Stomach (tissue), 19 donors: ENCODE measurements at regions of chr7 and their contacts with region 1.

Region 1: GRCh38 chr7:123865517-123866117 is 20.6 kb downstream of the HYAL4 start:
- DNase-seq: peak; percentile 60 to 89
- H3K4me3 ChIP-seq: no peak overlapping the region
- H3K27ac ChIP-seq: no peak overlapping the region
- H3K4me1 ChIP-seq: peaks cover 0 to 20% (median 11%) of the 10 kb centered on the region in 4 donors
- H3K27me3 ChIP-seq: no peaks in the 10 kb centered on the region
- CTCF ChIP-seq: peak in 5 of 7 experiments; percentile 53 to 78 (median 75)
- EP300 ChIP-seq: no peak
- POLR2A ChIP-seq: no peak

Region 2: DNA sequence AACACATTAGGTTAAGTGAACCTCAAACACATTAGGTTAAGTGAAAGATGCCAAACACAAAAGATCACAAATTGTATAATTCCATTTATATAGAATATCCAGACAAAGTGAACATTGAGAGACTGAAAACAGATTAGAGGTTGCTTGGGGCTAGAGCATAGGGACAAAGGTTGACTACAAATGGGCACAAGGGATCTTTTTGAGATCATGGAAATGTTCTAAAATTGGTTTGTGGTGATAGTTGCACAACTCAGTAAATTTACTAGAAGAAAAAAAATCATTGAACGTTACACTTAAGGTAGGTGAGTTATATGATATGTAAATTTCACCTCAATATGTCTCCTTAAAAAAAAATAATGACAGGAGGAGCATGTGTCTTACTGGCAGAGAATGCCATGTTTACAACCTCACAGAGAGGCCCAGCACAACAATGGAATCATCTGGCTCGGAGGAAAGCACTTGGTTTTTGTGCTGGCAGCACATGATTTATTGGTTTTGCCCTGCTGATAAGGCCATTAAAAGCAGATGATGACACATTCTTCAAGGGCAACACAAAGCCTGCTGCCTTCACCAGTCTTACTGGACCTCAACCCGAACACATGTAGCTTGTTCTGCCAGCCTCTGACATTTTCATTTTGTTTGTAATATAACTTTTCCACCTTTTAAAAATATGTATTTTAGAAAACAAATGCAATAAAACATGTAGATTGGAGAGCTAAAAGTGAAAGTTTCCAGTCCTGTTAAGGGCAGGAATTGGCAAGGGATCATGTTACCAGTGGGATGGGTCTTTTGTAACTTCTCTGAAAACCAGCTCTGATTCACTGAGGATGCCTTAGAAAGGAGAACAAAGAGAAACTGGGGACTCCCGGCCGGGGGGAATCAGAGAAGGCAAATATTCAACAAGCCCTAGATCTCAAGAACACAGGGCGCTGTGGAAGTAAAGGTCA is 221.8 kb before region 1 on chr7:
- intact Hi-C with region 1: loop called (anchors 5 kb)
- DNase-seq: peak in 1 of 2 donors; percentile 70
- H3K4me3 ChIP-seq: no peak overlapping the region
- H3K27ac ChIP-seq: peak overlapping the region in 1 of 5 donors; percentile 35
- H3K4me1 ChIP-seq: peaks cover 0 to 12% (median 7%) of the 10 kb centered on the region in 4 donors
- H3K27me3 ChIP-seq: no peaks in the 10 kb centered on the region
- CTCF ChIP-seq: no peak
- EP300 ChIP-seq: no peak
- POLR2A ChIP-seq: no peak

Region 3: GRCh38 chr7:123674399-123675180 is 191.0 kb before region 1 on chr7:
- intact Hi-C with region 1: no loop called
- DNase-seq: peak in 1 of 2 donors; percentile 16
- H3K4me3 ChIP-seq: no peak overlapping the region
- H3K27ac ChIP-seq: no peak overlapping the region
- H3K4me1 ChIP-seq: peaks cover 0 to 21% (median 10%) of the 10 kb centered on the region in 4 donors
- H3K27me3 ChIP-seq: no peaks in the 10 kb centered on the region
- CTCF ChIP-seq: no peak
- EP300 ChIP-seq: no peak
- POLR2A ChIP-seq: no peak

Region 4: GRCh38 chr7:123797673-123798527 is 67.7 kb before region 1 on chr7:
- intact Hi-C with region 1: loop called (anchors 10 kb)
- DNase-seq: peak in 1 of 2 donors; percentile 89
- H3K4me3 ChIP-seq: peak overlapping the region in 2 of 4 donors; percentile 20 to 21
- H3K27ac ChIP-seq: peak overlapping the region in 4 of 5 donors; percentile 52 to 77 (median 61)
- H3K4me1 ChIP-seq: peaks cover 0 to 10% (median 2%) of the 10 kb centered on the region in 4 donors
- H3K27me3 ChIP-seq: no peaks in the 10 kb centered on the region
- CTCF ChIP-seq: peak in 4 of 7 experiments; percentile 43 to 71 (median 49)
- EP300 ChIP-seq: no peak
- POLR2A ChIP-seq: no peak

Region 5: DNA sequence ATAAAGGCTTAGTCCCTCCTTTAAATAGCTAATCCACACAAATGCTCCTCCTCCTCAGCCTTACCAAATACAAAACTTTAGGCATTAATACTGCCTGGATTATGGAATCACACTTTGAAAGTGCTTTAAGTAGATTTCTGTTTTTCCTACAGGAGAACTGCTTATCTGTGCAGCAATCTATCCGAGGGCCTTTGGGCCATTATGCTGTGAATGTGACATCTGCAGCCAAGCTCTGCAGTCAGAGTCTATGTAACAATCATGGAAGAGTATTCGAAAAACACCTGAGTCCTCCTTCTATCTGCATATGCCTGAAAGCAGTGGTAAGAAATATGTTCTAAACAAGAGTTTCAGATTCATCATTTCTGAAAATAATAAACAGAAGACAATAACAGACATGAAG is 36.8 kb before region 1 on chr7:
- intact Hi-C with region 1: no loop called
- DNase-seq: no peak
- H3K4me3 ChIP-seq: no peak overlapping the region
- H3K27ac ChIP-seq: no peak overlapping the region
- H3K4me1 ChIP-seq: peaks cover 0 to 13% (median 6%) of the 10 kb centered on the region in 4 donors
- H3K27me3 ChIP-seq: no peaks in the 10 kb centered on the region
- CTCF ChIP-seq: no peak
- EP300 ChIP-seq: no peak
- POLR2A ChIP-seq: no peak